AG04450 (cell line): ENCODE measurements at regions of chr1 and their contacts with region 1.

Region 1: DNA sequence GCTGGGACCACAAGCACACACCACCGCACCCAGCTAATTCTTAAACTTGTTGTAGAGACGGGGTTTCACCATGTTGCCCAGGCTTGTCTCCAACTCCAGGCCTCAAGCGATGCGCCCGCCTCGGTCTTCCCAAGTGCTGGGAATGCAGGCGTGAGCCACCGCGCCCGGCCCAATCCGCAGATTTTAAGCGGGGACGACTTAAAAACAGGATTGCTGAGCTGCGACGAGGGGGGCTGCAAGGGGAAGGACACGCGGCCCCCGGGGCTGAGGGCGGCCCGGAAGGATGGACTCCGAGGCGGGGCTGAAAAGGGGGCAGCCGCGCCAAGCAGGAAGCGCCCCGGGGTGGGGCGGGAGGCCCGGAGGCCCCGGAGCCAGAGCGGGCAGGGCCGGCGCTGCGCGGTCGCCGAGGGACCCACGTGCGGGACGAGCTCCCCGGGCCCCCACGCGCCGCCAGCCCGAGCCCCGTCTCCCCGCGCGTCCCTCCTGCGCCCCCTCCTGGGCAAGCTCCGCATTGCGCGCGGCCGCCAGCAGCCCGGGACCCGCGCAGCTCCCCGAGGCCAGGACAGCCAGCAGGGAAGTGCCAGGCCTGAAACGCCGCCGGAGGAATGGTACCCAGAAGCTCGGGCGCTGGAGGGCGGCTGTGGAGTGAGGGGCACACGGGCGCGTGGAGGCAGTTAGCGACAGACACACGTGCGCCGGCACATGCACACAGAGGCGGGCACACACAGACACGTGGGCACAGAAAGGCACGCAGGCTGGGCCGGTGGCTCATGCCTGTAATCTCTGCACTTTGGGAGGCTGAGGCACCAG is 5.5 kb upstream of the PRKCZ start:
- DNase-seq: no peak
- H3K4me3 ChIP-seq: peak overlapping the region; percentile 7; the same call in 1 of the 2 replicates
- H3K27ac ChIP-seq: no peak overlapping the region
- H3K27me3 ChIP-seq: peaks cover 41% of the 10 kb centered on the region
- CTCF ChIP-seq: peak; percentile 60

Region 2: GRCh38 chr1:1703796-1704195 is 340.9 kb before region 1 on chr1:
- CTCF ChIA-PET with region 1: no interaction called
- POLR2A ChIA-PET with region 1: no interaction called
- DNase-seq: no peak
- H3K4me3 ChIP-seq: no peak overlapping the region
- H3K27ac ChIP-seq: no peak overlapping the region
- H3K27me3 ChIP-seq: no peaks in the 10 kb centered on the region
- CTCF ChIP-seq: no peak

Region 3: DNA sequence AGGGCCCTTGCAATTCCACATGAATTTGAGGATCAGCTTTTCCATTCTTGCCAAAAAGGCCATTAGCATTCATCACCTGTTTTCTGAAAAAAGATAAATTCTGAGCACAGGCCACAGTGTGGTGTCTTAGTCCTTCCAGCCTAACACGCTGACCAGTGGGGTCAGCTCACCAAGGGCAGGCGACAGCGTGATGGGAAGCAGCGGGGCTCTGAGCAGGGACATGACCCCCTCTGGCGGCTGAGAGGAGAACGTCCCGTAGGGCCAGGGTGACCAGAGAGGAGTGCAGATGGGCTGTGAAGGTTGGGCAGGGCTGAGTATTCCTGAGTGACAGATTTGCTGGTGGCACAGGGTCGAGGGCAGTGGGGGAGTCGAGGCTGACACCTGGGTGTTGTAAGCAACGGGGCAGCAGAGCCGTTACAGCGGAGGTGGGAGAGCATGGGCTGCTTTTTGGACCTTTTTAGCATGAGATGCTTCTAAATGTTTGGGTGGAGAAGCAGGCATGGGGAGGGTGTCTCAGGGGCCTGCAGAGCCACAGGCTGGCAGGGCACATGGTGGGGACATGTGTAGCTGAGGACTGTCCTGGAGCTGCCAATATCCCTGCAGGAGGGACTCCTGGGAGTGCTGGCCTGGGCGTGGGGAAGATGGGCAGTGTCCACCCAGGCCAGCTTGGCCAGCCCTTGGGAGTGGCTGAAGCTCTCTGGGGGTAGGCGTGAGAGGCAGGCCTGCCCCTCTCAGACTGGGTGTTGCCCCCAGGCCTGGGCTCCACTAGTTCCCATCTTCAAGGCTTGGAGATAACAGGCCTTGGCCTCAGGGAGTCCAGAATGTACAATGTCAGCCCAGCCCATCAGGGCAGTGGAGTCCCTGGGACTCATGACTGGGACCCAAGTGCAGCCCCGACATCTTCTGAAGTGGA is 138.3 kb before region 1 on chr1:
- CTCF ChIA-PET with region 1: interaction called, 13 read pairs
- POLR2A ChIA-PET with region 1: no interaction called
- DNase-seq: peak; percentile 38
- H3K4me3 ChIP-seq: no peak overlapping the region
- H3K27ac ChIP-seq: no peak overlapping the region
- H3K27me3 ChIP-seq: no peaks in the 10 kb centered on the region
- CTCF ChIP-seq: peak; percentile 96

Region 4: GRCh38 chr1:1943834-1944570 is 100.7 kb before region 1 on chr1:
- CTCF ChIA-PET with region 1: interaction called, 13 read pairs
- POLR2A ChIA-PET with region 1: no interaction called
- DNase-seq: no peak
- H3K4me3 ChIP-seq: no peak overlapping the region
- H3K27ac ChIP-seq: no peak overlapping the region
- H3K27me3 ChIP-seq: peaks cover 13% of the 10 kb centered on the region
- CTCF ChIP-seq: peak; percentile 74

Region 5: GRCh38 chr1:1959840-1960479 is 84.8 kb before region 1 on chr1:
- CTCF ChIA-PET with region 1: interaction called, 45 read pairs
- POLR2A ChIA-PET with region 1: no interaction called
- DNase-seq: peak; percentile 10
- H3K4me3 ChIP-seq: no peak overlapping the region
- H3K27ac ChIP-seq: no peak overlapping the region
- H3K27me3 ChIP-seq: peaks cover 25% of the 10 kb centered on the region
- CTCF ChIP-seq: peak; percentile 71

Region 6: GRCh38 chr1:2031546-2032540 is 12.9 kb before region 1 on chr1:
- CTCF ChIA-PET with region 1: interaction called, 13 read pairs
- POLR2A ChIA-PET with region 1: no interaction called
- DNase-seq: no peak
- H3K4me3 ChIP-seq: no peak overlapping the region
- H3K27ac ChIP-seq: no peak overlapping the region
- H3K27me3 ChIP-seq: peaks cover 24% of the 10 kb centered on the region
- CTCF ChIP-seq: no peak